ENCODE measurements at regions of chr18 and their contacts with region 1.

Region 1: GRCh38 chr18:45738658-45739057 is 14.7 kb downstream of the SLC14A1 start:
- DNase-seq: no peak
- ATAC-seq: peak in 1 of 8 donors; percentile 30
- H3K4me3 ChIP-seq: no peak overlapping the region
- H3K27ac ChIP-seq: peak overlapping the region in 3 of 10 donors; percentile 19 to 89 (median 22)
- H3K4me1 ChIP-seq: peaks cover 0 to 32% (median 6%) of the 10 kb centered on the region in 9 donors
- H3K27me3 ChIP-seq: no peaks in the 10 kb centered on the region
- CTCF ChIP-seq: peak in 3 of 9 donors; percentile 6 to 19 (median 14)

Region 2: DNA sequence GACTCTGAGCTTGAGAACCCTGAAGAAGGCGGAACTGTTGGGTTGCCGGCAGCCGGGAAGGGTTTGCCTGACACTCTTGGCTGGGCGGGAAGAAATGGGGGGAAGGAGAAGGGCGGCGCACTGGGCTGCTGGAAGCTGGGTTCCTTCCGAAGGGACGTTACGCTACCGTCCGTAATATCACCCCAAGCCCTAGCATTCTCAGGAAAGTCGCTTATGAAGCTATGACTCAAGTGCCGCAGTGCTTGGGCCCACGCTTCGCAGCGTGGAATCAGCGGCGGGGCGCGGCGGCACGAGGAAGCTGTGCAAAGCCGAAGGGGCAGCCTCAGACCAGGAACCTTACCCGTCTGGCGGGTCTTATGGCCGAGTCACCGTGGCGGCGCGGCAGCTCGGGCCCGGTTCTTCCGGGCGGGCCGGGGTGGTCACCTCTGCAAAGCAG is 36.6 kb after region 1 on chr18:
- intact Hi-C with region 1: loop called in 1 of 10 experiments (anchors 5 kb)
- DNase-seq: peak; percentile 78 to 84
- ATAC-seq: peak; percentile 88 to 96 (median 94)
- H3K4me3 ChIP-seq: peak overlapping the region; percentile 18 to 81 (median 71)
- H3K27ac ChIP-seq: peak overlapping the region; percentile 8 to 95 (median 82)
- H3K4me1 ChIP-seq: peaks cover 0 to 27% (median 9%) of the 10 kb centered on the region in 9 donors
- H3K27me3 ChIP-seq: peaks cover 0 to 10% (median 0%) of the 10 kb centered on the region in 7 donors
- CTCF ChIP-seq: no peak

Measured in heart right ventricle (tissue), 16 donors.